ENCODE measurements at regions of chr3 and their contacts with region 1.

Region 1: DNA sequence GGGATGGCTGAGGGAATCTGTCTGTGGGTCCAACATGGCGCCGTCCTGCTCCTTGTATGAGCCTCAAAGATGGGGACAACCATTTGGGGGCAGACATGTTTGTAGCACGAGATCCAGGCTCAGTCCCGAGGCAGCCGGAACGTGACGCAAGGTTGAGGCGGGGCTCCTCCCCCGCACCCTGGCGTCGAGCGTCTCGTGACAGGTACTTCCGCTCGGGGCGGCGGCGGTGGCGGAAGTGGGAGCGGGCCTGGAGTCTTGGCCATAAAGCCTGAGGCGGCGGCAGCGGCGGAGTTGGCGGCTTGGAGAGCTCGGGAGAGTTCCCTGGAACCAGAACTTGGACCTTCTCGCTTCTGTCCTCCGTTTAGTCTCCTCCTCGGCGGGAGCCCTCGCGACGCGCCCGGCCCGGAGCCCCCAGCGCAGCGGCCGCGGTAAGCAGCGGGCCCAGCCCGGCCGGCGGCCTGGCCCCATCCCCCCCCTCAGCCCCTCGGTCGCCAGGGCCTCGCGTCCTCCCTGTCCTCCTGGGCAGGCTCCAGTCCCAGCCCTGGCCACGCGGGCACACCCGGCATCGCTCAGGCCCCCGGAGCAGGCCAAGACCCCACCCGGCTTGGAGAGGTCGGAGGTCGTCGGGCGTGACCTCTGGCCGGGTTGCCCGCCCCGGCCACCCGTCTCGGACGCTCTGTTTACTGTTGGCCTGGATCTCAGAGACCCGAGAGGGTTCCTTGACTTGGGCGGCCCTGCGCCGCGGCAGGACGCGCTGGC is at the start of gene RAB7A:
- DNase-seq: peak; percentile 99
- total RNA-seq, gene RAB7A: 215 TPM

Region 2: GRCh38 chr3:128784232-128784631 is 58.1 kb after region 1 on chr3:
- intact Hi-C with region 1: loop called (anchors 5 kb)
- DNase-seq: peak; percentile 85

Region 3: GRCh38 chr3:128794770-128795649 is 68.9 kb after region 1 on chr3:
- intact Hi-C with region 1: loop called (anchors 2 kb)
- DNase-seq: no peak

Measured in cardiac septum (tissue), 1 donor.